Sigmoid colon (tissue), 7 donors: ENCODE measurements at regions of chr15 and their contacts with region 1.

Region 1: GRCh38 chr15:46676233-46677206 is 1040.8 kb upstream of the SEMA6D start:
- DNase-seq: no peak
- H3K4me3 ChIP-seq: no peak overlapping the region
- H3K27ac ChIP-seq: no peak overlapping the region
- H3K4me1 ChIP-seq: no peaks in the 10 kb centered on the region
- H3K27me3 ChIP-seq: no peaks in the 10 kb centered on the region
- CTCF ChIP-seq: no peak
- EP300 ChIP-seq: no peak
- POLR2A ChIP-seq: no peak

Region 2: GRCh38 chr15:46654993-46655392 is 21.5 kb before region 1 on chr15:
- intact Hi-C with region 1: loop called (anchors 2 kb)
- DNase-seq: no peak
- H3K4me3 ChIP-seq: no peak overlapping the region
- H3K27ac ChIP-seq: no peak overlapping the region
- H3K4me1 ChIP-seq: no peaks in the 10 kb centered on the region
- H3K27me3 ChIP-seq: no peaks in the 10 kb centered on the region
- CTCF ChIP-seq: no peak
- EP300 ChIP-seq: no peak
- POLR2A ChIP-seq: no peak

Region 3: DNA sequence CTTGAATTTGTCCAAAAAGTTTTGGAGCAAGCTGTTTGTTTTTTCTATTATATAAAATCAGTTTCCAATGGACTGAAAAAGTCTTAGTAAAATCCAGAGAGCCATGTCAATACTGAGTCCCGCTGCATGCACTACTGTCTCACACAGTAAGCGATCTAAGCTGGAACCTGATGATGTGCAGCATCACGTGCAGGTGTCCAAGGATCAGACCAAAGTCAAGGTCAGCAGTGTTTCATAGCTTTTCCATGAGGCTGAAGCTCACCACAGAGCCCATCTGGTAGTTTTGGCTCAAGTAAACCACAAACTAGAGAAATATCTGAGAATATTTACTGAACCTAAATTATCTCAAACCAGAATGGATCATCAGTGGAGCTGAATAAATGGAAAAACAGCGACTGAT is 256.8 kb after region 1 on chr15:
- intact Hi-C with region 1: no loop called
- DNase-seq: no peak
- H3K4me3 ChIP-seq: no peak overlapping the region
- H3K27ac ChIP-seq: no peak overlapping the region
- H3K4me1 ChIP-seq: no peaks in the 10 kb centered on the region
- H3K27me3 ChIP-seq: no peaks in the 10 kb centered on the region
- CTCF ChIP-seq: no peak
- EP300 ChIP-seq: no peak
- POLR2A ChIP-seq: no peak